Ascending aorta (tissue), 2 donors: ENCODE measurements at regions of chrX and their contacts with region 1.

Region 1: DNA sequence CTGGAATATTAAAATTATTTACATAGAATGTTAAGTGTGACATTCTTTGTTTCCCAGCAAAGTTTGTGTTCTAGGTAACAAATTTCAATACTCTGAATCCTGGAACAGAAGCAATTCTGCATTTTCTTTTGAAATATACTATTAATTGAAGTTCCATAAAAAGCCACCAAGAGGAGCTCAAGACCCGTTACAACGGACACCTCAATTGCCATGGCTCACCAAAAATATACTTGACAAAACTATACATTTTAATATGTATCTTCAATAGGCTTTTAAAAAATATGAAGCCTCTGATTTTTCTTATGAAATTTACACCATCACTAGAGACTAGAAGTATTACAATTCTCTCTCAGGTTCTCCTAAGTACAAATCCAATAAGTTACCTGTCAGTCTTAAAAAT is 111.4 kb downstream of the NYX start:
- DNase-seq: no peak
- H3K4me3 ChIP-seq: no peak overlapping the region
- H3K27ac ChIP-seq: peak overlapping the region in 1 of 2 donors; percentile 71
- H3K4me1 ChIP-seq: no peaks in the 10 kb centered on the region
- H3K27me3 ChIP-seq: no peaks in the 10 kb centered on the region
- CTCF ChIP-seq: peak; percentile 39 to 50 (median 46)

Region 2: DNA sequence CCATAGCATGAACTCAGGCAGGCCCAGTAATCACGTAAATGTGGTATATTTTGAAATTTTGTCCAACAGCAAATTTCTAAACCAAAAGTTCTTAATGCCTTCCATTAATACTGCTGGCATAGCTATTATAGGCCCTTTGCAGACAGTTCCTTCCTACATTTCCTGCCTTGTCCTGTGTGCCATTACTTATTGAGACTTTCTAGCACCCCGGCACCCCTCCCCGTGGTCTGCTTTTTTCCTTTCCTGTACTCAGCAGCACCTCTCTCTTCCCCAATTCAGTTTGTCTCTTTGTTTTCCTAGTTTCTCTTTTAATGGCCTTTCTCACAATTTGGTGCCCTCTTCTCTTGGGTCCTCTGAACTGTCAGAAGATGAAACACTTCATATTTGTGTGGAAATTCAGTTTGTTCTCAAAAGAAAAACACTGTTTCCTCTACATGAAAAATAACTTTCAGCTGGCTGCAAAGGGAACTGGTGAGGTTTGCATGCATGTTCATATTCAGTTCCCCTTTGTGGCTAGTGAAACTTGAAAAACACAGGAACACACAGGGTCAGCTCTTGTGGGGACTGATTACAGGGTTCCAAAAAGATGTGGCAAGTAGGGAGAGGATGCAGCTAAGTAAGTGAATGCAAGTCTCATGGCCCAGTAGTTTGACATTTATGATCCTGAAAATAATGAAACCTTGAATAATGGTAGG is 147.3 kb after region 1 on chrX:
- intact Hi-C with region 1: loop called (anchors 5 kb)
- DNase-seq: no peak
- H3K4me3 ChIP-seq: no peak overlapping the region
- H3K27ac ChIP-seq: peak overlapping the region in 1 of 2 donors; percentile 28
- H3K4me1 ChIP-seq: no peaks in the 10 kb centered on the region
- H3K27me3 ChIP-seq: no peaks in the 10 kb centered on the region
- CTCF ChIP-seq: no peak

Region 3: DNA sequence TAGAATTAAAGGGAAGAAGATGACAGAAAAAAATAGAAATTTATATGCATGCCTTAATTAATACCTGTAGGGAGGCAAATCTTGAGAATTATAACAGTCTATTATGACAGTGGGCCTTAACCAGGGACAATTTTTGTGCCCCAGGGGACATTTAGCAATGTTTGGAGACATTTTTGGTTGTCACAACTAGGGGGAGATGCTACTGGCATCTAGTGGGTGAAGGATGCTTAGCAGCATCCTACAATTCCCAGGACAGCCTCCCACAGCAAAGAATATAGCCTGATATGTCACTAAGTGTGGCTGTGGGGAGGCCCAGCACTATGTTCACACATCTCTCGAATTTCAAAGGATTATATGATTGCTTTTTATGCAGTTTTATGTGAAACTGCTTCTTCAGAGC is 176.0 kb after region 1 on chrX:
- intact Hi-C with region 1: loop called (anchors 5 kb)
- DNase-seq: no peak
- H3K4me3 ChIP-seq: no peak overlapping the region
- H3K27ac ChIP-seq: no peak overlapping the region
- H3K4me1 ChIP-seq: no peaks in the 10 kb centered on the region
- H3K27me3 ChIP-seq: no peaks in the 10 kb centered on the region
- CTCF ChIP-seq: peak in 2 of 3 experiments; percentile 18 to 45

Region 4: GRCh38 chrX:41759817-41760216 is 201.3 kb after region 1 on chrX:
- intact Hi-C with region 1: loop called (anchors 5 kb)
- DNase-seq: no peak
- H3K4me3 ChIP-seq: no peak overlapping the region
- H3K27ac ChIP-seq: no peak overlapping the region
- H3K4me1 ChIP-seq: no peaks in the 10 kb centered on the region
- H3K27me3 ChIP-seq: no peaks in the 10 kb centered on the region
- CTCF ChIP-seq: peak in 2 of 3 experiments; percentile 43 to 50

Region 5: GRCh38 chrX:42093756-42094155 is 535.2 kb after region 1 on chrX:
- intact Hi-C with region 1: loop called (anchors 5 kb)
- DNase-seq: no peak
- H3K4me3 ChIP-seq: no peak overlapping the region
- H3K27ac ChIP-seq: no peak overlapping the region
- H3K4me1 ChIP-seq: no peaks in the 10 kb centered on the region
- H3K27me3 ChIP-seq: peaks cover 4% of the 10 kb centered on the region
- CTCF ChIP-seq: no peak